OCI-LY7 (cell line): ENCODE measurements at regions of chr2 and their contacts with region 1.

Region 1: GRCh38 chr2:85707304-85707703 is 13.1 kb downstream of the GNLY start:
- DNase-seq: peak; percentile 84
- H3K4me3 ChIP-seq: no peak overlapping the region
- H3K27ac ChIP-seq: no peak overlapping the region
- H3K4me1 ChIP-seq: peaks cover 11% of the 10 kb centered on the region
- CTCF ChIP-seq: peak; percentile 94

Region 2: DNA sequence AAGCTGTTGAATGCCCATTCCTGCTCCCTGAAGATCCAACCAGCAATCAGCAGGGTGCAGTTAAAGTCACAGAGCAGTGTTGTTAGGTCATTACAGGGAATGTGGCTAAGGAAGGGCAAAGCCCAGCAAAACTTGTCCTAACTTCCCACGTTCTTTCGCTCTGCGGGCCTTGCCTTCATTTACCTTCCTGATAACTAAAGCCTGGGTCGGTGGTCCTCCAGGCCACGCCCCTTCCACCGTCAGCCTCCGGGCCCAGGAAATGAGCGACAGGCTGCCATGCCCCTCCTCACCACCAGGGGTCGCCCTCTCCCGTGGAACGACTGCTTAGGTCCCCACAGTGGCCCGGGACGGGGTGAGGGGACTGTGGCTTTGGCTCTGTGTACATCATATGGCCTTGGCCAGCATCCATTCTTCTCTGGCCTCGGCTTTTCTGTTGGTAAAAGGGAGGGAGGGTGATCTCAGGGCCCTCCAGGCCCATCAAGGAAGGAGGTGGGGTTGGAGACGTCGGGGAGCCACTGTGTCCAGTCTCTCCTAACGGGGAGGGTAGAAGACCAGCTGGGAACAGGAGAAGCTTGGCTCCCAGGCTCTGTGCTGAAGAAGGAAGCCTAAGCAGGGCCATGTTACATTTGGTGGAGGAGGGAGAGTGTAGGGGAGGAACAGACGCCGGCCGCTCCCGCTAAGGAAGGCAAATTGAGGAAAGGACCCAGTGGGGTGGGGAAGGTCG is 286.6 kb before region 1 on chr2:
- CTCF ChIA-PET with region 1: no interaction called
- POLR2A ChIA-PET with region 1: interaction called, 4 read pairs
- intact Hi-C with region 1: loop called (anchors 1 kb)
- DNase-seq: peak; percentile 87
- H3K4me3 ChIP-seq: no peak overlapping the region
- H3K27ac ChIP-seq: no peak overlapping the region
- H3K4me1 ChIP-seq: peaks cover 28% of the 10 kb centered on the region
- CTCF ChIP-seq: peak; percentile 98

Region 3: GRCh38 chr2:85635636-85636035 is 71.7 kb before region 1 on chr2:
- CTCF ChIA-PET with region 1: no interaction called
- POLR2A ChIA-PET with region 1: interaction called, 4 read pairs
- intact Hi-C with region 1: loop called (anchors 5 kb)
- DNase-seq: no peak
- H3K4me3 ChIP-seq: no peak overlapping the region
- H3K27ac ChIP-seq: no peak overlapping the region
- H3K4me1 ChIP-seq: no peaks in the 10 kb centered on the region
- CTCF ChIP-seq: no peak

Region 4: DNA sequence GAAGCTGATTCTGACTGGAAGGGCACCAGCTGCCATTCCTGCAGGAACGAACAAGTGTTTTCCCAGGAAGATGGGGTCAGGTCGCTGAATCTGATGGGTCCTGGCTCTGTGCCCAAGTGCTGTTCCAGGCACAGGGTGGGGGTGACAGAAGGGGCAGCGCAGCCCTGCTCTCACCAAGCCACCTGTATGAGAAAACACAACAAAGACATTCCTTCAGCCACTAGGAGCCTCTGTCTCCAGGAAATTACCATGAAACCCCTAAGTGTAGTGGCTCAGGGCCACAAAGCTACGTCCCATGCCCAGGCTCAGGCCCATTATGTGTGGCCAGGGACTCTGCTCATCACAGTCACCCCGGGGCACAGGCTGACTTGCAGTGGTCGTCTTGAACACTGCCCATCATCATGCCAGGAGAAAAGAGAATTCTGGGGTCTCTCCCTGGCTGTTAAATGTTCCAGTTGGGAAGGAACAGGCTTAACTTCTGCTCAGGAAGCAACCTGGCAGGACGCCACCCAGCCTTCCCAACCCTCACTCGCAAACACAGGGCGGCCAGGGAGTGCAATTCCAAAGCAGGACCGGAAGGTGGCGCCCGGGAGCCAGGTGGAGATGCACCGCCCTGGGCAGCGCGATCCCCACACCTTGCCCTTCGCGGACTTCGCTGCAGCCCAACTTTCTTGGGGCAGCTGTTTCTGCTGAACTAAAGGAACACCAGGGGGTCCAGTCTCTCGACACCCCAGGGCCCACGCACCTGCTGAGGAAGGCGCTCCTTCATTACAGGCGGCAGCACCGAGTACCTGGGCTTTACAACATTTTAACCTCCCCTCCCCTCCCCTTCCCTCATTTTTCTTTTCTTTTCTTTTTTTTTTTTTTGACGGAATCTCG is 28.3 kb before region 1 on chr2:
- CTCF ChIA-PET with region 1: no interaction called
- POLR2A ChIA-PET with region 1: no interaction called
- intact Hi-C with region 1: loop called (anchors 2 kb)
- DNase-seq: peak; percentile 30
- H3K4me3 ChIP-seq: no peak overlapping the region
- H3K27ac ChIP-seq: no peak overlapping the region
- H3K4me1 ChIP-seq: no peaks in the 10 kb centered on the region
- CTCF ChIP-seq: peak; percentile 88